ENCODE measurements at regions of chr20 and their contacts with region 1.

Region 1: DNA sequence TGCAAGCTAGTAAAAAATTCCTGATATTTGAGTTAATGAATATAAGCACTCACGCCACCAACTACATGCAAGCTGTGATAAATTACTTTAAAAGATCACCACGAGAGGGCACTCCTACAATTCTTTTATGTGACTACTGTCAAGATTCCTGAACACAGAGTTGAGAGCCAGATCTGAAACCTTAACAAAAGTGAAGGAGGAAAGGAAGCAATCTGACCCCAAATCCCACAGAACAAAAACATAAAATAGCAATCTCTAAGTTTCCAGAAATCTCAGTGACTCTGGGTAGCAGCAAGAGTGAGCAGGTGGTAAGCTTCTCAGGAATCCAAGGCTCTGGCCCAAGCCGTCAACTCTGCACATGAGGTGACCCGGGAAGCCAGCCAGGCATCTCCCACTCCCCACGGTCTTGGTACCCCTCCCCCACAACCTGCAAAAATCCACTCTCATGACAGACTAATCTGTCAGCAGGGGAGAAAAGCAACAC is 55.1 kb downstream of the STAU1 start:
- DNase-seq: peak; percentile 59
- CTCF ChIP-seq: peak; percentile 61

Region 2: GRCh38 chr20:49179368-49180277 is 46.6 kb after region 1 on chr20:
- CTCF ChIA-PET with region 1: interaction called, 17 read pairs
- POLR2A ChIA-PET with region 1: no interaction called
- DNase-seq: peak; percentile 42
- CTCF ChIP-seq: no peak

Region 3: DNA sequence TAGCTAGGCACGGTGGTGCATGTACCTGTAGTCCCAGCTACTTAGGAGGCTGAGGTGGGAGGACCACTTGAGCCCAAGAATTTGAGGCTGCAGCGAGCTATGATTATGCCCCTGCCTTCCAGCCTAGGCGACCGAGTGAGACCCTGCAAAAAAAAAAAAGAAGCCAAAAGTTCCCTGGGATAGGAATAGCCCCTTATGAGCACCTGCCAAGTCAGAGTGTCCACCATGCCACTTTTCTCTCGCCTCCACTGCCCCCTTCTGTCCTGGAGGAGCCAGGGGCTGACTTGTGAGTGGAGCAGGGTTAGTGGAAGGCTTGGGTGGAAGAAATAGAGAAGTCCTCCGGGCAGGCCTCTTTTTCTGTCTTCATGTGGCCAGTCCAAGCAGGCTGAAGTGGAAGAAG is 74.0 kb after region 1 on chr20:
- CTCF ChIA-PET with region 1: interaction called, 15 read pairs
- POLR2A ChIA-PET with region 1: no interaction called
- DNase-seq: peak; percentile 35
- CTCF ChIP-seq: peak; percentile 40

Region 4: GRCh38 chr20:49395183-49395582 is 262.1 kb after region 1 on chr20:
- CTCF ChIA-PET with region 1: no interaction called
- POLR2A ChIA-PET with region 1: no interaction called
- DNase-seq: no peak
- CTCF ChIP-seq: no peak

Measured in GM10248 (cell line).